Sigmoid colon (tissue), 7 donors: ENCODE measurements at regions of chr9 and their contacts with region 1.

Region 1: DNA sequence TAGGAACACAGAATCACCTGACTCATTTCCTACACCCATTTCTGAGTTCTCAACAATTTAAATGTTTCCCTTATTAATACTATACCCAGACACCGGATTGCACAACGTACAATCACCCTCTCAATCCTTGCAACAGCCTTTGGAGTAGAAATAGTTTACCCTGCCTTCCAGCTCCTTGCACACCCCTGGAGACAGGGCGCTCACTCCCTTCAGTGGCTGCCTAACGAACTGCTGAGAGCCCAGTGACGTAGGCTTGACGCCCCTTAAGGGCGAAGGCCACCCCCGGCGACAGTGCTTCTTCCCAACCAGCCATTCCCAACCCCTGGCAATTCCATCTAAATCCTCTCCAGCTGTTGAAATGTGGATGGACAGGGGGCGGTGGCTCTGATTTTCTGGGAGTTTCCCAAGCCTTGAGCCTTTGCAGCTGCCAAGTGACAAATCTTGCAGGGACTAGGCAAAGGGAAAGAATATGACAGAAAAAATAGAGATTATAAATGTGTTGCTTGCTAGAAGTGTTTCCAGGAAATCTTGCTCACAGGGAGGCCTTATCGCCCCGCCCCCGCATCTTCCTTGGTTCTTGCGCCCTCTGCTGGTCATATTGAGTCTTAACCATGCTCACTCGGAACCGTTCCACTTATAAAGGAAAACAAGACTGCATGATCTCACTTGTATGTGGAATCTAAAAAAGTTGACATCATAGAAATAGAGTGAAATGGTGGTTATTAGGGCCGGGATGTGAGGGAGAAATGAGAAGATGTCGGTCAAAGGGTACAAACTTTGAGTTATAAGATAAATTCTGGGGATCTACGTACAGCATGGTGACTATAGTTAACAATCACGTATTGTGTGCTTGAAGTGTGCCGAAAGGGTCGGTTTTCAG is 7.6 kb upstream of the BARX1 start:
- DNase-seq: peak; percentile 89
- H3K4me3 ChIP-seq: no peak overlapping the region
- H3K27ac ChIP-seq: no peak overlapping the region
- H3K4me1 ChIP-seq: peaks cover 0 to 36% (median 30%) of the 10 kb centered on the region in 4 donors
- H3K27me3 ChIP-seq: peaks cover 36 to 51% (median 46%) of the 10 kb centered on the region in 3 donors
- CTCF ChIP-seq: peak; percentile 55 to 83 (median 78)
- EP300 ChIP-seq: no peak
- POLR2A ChIP-seq: no peak

Region 2: DNA sequence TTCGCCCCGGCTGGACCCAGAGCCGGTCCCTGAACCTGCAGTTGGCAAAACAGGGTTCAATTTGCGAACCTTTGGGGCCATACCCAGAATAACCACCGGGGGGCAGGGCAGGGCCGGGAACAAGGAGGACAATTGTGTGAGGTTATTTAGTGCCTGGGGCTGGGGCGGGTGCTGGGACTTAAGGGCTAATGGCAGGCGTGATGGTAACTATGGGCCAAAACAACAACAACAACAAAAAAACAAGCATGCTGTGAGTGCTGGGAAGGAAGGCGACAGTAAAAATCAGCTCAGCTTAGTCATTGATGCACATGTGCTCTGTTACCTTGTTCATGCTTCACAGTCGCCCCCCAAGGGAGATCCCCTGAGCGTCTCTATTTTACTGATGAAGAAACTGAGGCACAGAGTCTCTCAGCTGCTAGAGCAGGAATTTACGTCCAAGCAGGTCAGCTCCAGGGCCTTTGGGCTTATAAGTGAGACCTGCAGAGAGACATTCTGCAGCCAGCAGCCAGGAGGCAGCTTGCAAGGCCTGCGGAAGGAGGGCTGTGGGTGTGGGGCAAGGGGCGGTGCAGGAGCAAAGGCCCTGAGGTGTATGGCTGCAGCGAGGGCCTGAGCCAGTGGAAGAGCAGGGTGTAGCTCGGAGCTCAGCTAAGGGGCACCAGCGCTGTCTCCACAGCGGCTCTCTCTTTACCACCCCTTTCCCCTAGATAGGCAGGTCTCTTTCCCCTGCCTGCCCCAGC is 280.4 kb before region 1 on chr9:
- intact Hi-C with region 1: loop called (anchors 1 kb)
- DNase-seq: peak; percentile 75
- H3K4me3 ChIP-seq: no peak overlapping the region
- H3K27ac ChIP-seq: no peak overlapping the region
- H3K4me1 ChIP-seq: peaks cover 0 to 4% (median 0%) of the 10 kb centered on the region in 4 donors
- H3K27me3 ChIP-seq: no peaks in the 10 kb centered on the region
- CTCF ChIP-seq: peak; percentile 70 to 84 (median 82)
- EP300 ChIP-seq: no peak
- POLR2A ChIP-seq: no peak

Region 3: GRCh38 chr9:93801581-93802284 is 161.1 kb before region 1 on chr9:
- intact Hi-C with region 1: no loop called
- DNase-seq: no peak
- H3K4me3 ChIP-seq: no peak overlapping the region
- H3K27ac ChIP-seq: no peak overlapping the region
- H3K4me1 ChIP-seq: no peaks in the 10 kb centered on the region
- H3K27me3 ChIP-seq: no peaks in the 10 kb centered on the region
- CTCF ChIP-seq: no peak
- EP300 ChIP-seq: no peak
- POLR2A ChIP-seq: no peak